ENCODE measurements at regions of chr7 and their contacts with region 1.

Region 1: GRCh38 chr7:99040104-99040958 is 103.6 kb downstream of the SMURF1 start:
- DNase-seq: peak; percentile 89 to 92
- ATAC-seq: peak; percentile 84
- H3K4me3 ChIP-seq: no peak overlapping the region
- H3K27ac ChIP-seq: peak overlapping the region; percentile 12 to 77
- H3K4me1 ChIP-seq: no peaks in the 10 kb centered on the region
- H3K27me3 ChIP-seq: no peaks in the 10 kb centered on the region

Region 2: GRCh38 chr7:99098824-99099498 is 58.6 kb after region 1 on chr7:
- intact Hi-C with region 1: loop called in 1 of 2 experiments (anchors 10 kb)
- DNase-seq: no peak
- ATAC-seq: peak; percentile 73
- H3K4me3 ChIP-seq: no peak overlapping the region
- H3K27ac ChIP-seq: peak overlapping the region in 1 of 2 donors; percentile 75
- H3K4me1 ChIP-seq: peaks cover 4 to 10% of the 10 kb centered on the region in 2 donors
- H3K27me3 ChIP-seq: no peaks in the 10 kb centered on the region

Region 3: DNA sequence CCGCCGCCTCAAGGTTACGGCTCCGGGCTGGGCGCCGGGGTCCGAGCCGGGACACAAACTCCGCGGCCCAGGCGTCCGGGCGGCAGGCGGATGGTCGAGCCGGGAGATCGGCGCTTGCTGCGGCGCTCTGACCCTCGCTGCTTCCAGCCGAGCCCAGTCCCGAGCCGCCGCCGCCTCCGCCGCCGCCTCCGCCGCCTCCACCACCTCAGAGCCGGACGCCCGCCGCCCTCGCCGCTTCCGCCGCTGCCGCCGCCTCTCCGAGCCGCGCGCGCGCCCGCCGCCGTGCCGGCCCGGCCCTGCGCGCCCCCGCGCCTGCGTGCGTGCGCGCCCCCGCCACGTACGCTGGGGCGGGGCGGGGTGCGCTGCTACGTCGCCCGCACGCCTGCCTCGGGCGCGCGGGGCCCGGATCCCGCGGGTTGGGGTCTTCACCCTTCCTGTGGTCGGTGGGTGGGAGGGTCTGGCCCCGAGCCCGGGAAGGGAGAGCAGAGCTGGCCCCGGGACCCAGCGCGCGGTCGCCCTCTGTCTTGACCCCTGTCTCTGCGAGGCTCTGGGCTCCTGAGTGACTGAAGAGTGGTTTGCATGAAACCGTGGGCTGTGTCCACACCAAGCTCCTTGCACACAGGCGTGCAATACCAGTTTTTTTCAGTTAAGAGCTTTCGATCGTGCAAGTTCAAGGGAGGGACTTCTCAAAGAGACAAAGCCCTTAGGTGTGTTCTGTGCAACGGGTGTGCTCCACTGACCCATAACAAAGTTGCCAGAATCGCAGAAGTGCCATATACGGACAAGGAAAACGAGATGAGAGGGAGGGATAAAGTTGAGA is 103.7 kb after region 1 on chr7 and contains the start of gene SMURF1:
- intact Hi-C with region 1: loop called in 1 of 2 experiments (anchors 5 kb)
- DNase-seq: peak; percentile 81 to 90
- ATAC-seq: peak; percentile 83
- H3K4me3 ChIP-seq: peak within 1 kb of the TSS; percentile 96 to 98
- H3K27ac ChIP-seq: peak within 1 kb of the TSS; percentile 94 to 99
- H3K4me1 ChIP-seq: no peaks in the 10 kb centered on the region
- H3K27me3 ChIP-seq: no peaks in the 10 kb centered on the region
- total RNA-seq, gene SMURF1: 37.1 to 47.9 TPM

Region 4: GRCh38 chr7:99219985-99220384 is 179.7 kb after region 1 on chr7:
- intact Hi-C with region 1: loop called in 1 of 2 experiments (anchors 10 kb)
- DNase-seq: no peak
- ATAC-seq: no peak
- H3K4me3 ChIP-seq: no peak overlapping the region
- H3K27ac ChIP-seq: no peak overlapping the region
- H3K4me1 ChIP-seq: no peaks in the 10 kb centered on the region
- H3K27me3 ChIP-seq: no peaks in the 10 kb centered on the region

Region 5: DNA sequence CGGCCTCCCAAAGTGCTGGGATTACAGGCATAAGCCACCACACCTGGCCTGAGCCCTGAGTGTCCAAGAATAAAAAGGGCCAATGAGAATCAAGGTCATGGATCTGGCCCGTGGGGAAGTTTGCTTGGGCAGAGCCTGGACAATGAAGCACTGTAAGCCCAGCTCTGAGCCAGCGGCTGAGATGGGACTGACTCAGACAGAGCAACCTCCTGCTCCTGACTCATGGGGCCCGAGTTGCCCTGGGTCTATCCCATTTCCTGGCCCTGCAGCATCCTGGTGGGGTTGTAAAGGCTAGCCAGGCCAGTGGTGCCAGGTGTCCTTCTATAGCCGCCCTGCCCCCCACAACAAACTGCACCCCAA is 227.1 kb after region 1 on chr7:
- intact Hi-C with region 1: loop called in 1 of 2 experiments (anchors 5 kb)
- DNase-seq: peak; percentile 72 to 85
- ATAC-seq: peak; percentile 81
- H3K4me3 ChIP-seq: no peak overlapping the region
- H3K27ac ChIP-seq: peak overlapping the region in 1 of 2 donors; percentile 38
- H3K4me1 ChIP-seq: no peaks in the 10 kb centered on the region
- H3K27me3 ChIP-seq: no peaks in the 10 kb centered on the region

Region 6: DNA sequence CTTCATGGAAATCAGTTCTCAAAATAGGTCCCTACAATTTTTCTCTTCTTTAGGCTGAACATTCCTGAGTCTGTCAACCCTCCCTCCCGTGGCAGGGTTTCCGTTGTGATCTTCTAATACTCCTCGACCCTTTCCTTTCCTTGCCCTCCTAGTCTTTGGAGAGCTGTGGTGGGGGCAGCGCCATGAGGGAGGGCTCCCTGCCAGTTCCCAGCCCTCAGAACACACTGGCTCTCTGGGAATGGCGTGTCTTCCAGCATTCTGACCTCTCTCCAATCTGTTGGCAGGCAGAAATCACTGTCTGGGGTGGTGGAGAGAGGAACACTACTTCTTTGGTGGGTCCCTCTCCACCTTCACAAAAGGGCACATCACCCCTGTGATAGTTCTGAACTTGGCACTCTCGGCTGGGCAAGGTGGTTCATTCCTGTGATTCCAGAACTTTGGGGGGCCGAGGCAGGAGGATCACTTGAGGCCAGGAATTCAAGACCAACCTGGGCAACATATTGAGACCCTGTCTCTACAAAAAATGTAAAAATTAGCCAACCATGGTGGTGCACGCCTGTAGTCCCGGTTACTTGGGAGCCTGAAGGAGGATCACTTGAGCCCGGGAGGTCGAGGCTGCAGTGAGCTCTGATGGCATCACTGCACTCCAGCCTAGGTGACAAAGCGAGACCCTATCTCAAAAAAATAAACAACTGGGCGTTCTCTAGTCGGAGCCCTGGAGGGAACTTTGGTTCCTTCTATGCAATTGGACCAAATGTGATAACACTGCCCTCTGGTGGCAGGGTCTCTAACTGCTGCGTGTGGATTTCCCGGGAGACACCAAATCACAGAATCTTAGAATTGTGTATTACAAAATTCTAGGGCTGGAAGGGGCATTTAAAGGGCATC is 272.2 kb after region 1 on chr7:
- intact Hi-C with region 1: loop called (anchors 1 to 2 kb)
- DNase-seq: peak; percentile 79 to 87
- ATAC-seq: peak; percentile 86
- H3K4me3 ChIP-seq: no peak overlapping the region
- H3K27ac ChIP-seq: no peak overlapping the region
- H3K4me1 ChIP-seq: no peaks in the 10 kb centered on the region
- H3K27me3 ChIP-seq: no peaks in the 10 kb centered on the region

Region 7: DNA sequence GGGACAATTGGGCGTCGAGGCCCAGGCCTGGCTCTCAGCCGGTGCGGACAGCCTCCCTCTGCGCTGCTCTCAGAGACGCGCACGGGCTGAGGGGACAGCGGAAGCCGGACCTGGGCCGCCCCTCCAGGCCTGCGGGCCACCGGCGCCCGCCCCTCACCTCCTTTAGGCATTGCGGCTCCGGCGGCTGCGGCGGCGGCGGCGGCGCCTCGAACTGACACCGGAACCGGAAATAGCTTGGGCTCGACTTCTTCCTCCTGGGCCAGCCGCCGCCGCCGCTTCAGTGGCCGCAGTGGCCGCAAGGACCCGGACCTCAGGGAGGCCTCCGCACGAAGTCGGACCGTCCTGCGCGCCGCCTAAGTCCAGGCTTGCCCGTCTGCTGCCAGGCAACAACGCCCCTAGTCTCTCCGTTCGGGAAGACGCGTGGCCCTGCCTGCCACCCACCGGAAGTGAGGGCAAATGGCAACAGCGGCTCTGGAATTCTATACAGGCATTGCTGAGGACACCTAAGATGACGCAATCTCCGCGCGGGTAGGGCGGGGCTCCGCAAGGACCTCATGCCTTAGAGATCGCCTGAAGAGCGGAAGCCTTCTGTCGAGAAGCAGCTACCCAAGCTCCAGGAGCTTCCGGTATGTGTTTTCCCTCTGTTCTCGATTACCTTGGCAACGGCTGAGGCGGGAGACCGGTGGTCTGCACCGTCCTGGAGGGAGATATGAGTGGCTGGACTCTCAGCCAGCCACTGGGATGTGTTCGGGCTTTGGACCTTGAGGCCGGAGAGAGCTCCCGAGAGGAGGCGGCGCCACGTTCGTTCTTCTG is 368.3 kb after region 1 on chr7 and contains the starts of genes BUD31 and PDAP1:
- intact Hi-C with region 1: loop called in 1 of 2 experiments (anchors 10 kb)
- DNase-seq: peak; percentile 96 to 98
- ATAC-seq: peak; percentile 98
- H3K4me3 ChIP-seq: peak within 1 kb of the TSS; percentile 67 to 73
- H3K27ac ChIP-seq: peak within 1 kb of the TSS; percentile 70 to 89
- H3K4me1 ChIP-seq: peaks cover 0 to 3% of the 10 kb centered on the region in 2 donors
- H3K27me3 ChIP-seq: no peaks in the 10 kb centered on the region
- total RNA-seq, gene BUD31: 53.5 to 57.0 TPM
- total RNA-seq, gene PDAP1: 74.8 to 94.9 TPM

Measured in aorta (tissue), 5 donors.